Activated CD8-positive, alpha-beta memory T cell treated with anti-CD3 and anti-CD28 coated beads, Interleukin-2, amount 10 ng/mL, durations not matched to agents 7 days and 5 days (primary cell): ENCODE measurements at regions of chr9 and their contacts with region 1.

Region 1: DNA sequence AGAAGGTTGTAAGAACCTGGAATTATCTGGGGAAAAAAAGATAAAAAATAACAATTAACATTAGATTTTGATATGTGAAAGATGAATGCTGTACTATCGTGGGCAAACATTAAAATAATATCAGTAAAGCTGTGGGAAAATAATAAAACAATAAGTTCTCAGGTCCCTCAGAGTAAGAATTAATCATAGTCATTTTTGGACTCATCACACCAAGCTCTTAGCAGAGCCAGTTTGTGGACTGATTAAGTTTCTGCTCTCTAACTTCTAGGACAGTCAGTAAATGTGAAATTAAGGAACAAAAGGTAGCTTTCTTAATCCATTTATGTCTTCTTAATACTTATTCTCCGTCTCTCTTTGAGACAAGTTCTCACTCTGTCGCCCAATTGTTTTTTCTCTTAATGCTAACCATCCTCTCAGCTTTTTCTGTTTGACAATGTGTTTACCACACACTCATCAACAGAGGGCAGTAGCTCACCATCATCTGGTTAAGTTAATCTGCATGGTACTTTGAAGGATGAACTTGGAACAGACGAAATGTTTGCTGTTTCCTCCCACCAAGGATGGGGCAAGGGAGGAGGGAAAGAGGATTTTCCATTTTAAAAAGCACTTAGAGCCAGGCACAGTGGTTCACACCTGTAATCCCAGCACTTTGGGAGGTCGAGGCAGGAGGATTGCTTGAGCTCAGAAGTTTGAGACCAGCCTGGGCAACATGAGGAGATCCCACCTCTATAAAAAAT is 5.3 kb upstream of the ACO1 start:
- DNase-seq: peak; percentile 64
- ATAC-seq: peak; percentile 82
- H3K4me3 Mint-ChIP-seq: peak overlapping the region; percentile 2
- H3K27ac Mint-ChIP-seq: no peak overlapping the region
- H3K4me1 Mint-ChIP-seq: peaks cover 15% of the 10 kb centered on the region
- H3K27me3 Mint-ChIP-seq: peaks cover 36% of the 10 kb centered on the region

Region 2: GRCh38 chr9:32344551-32345182 is 34.5 kb before region 1 on chr9:
- CTCF ChIA-PET with region 1: no interaction called
- DNase-seq: no peak
- ATAC-seq: peak; percentile 84
- H3K4me3 Mint-ChIP-seq: no peak overlapping the region
- H3K27ac Mint-ChIP-seq: no peak overlapping the region
- H3K4me1 Mint-ChIP-seq: peaks cover 12% of the 10 kb centered on the region
- H3K27me3 Mint-ChIP-seq: no peaks in the 10 kb centered on the region

Region 3: DNA sequence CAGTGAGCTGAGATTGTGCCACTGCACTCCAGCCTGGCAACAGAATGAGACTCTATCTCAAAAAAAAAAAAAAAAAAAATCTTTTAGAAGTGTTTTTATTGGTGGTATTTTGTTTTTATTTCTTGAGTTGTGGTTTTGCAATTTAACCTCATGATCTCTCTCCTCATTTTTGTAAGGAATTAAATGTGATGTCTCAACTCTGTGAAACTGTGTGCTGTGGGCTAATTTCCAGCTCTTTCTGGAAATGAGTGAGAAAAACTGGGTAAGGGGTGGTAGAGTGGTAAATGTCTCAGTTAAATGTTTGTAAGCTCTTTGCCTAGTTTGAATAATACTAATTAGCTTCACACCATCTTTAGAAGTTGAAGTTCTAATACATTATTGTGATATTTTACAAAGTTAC is 34.3 kb after region 1 on chr9:
- CTCF ChIA-PET with region 1: interaction called, 12 read pairs
- DNase-seq: no peak
- ATAC-seq: no peak
- H3K4me3 Mint-ChIP-seq: no peak overlapping the region
- H3K27ac Mint-ChIP-seq: no peak overlapping the region
- H3K4me1 Mint-ChIP-seq: no peaks in the 10 kb centered on the region
- H3K27me3 Mint-ChIP-seq: no peaks in the 10 kb centered on the region

Region 4: GRCh38 chr9:32431940-32432555 is 52.9 kb after region 1 on chr9:
- CTCF ChIA-PET with region 1: interaction called, 23 read pairs
- DNase-seq: no peak
- ATAC-seq: no peak
- H3K4me3 Mint-ChIP-seq: no peak overlapping the region
- H3K27ac Mint-ChIP-seq: no peak overlapping the region
- H3K4me1 Mint-ChIP-seq: peaks cover 2% of the 10 kb centered on the region
- H3K27me3 Mint-ChIP-seq: no peaks in the 10 kb centered on the region

Region 5: GRCh38 chr9:32550562-32551433 is 171.6 kb after region 1 on chr9:
- CTCF ChIA-PET with region 1: interaction called, 15 read pairs
- DNase-seq: peak; percentile 96
- ATAC-seq: peak; percentile 83
- H3K4me3 Mint-ChIP-seq: peak overlapping the region; percentile 96
- H3K27ac Mint-ChIP-seq: peak overlapping the region; percentile 98
- H3K4me1 Mint-ChIP-seq: peaks cover 33% of the 10 kb centered on the region
- H3K27me3 Mint-ChIP-seq: no peaks in the 10 kb centered on the region

Region 6: DNA sequence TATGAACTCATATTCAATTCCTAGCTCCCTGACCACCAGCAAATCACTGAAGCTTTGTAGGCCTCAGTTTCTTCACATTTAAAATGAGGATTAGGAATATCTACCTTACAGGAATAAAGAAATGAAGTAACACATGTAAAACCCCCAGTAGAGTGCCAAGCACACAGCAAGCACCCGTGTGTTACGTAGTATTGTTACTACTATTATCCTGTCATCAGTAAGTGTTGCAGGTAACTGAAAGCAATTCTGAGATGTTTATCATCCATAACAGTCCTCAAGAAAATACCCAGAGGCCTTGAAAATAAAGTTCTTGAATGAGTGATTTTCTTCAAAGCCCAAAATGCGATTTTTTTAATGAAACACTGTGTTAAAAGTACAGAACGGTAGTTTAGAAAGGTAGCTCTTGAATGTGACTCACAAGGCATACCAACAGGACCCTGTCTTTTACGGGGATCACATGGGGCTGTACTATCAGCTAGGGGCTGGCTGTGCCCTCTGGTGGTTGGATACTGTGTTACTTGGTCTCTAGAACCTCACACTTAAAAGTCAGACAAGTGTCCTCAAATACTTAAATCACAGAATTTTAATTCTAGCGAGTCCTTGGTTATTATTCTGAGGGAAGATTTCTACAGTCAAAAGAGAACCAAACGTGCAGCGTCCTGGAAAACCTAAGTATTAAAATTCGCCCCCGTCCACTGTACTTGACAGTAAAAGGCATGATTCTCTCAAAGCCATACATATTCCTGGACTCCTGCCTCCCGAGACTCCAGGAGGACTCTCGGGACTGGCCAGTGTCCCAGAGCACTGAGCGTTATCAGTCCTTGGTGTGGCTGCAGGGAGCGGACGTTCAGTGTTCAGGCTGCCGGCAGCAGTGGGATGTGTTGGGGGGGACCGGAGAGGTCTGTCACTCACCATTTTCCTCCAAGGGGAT is 193.1 kb after region 1 on chr9:
- CTCF ChIA-PET with region 1: interaction called, 454 read pairs
- DNase-seq: peak; percentile 89
- ATAC-seq: peak; percentile 85
- H3K4me3 Mint-ChIP-seq: peak overlapping the region; percentile 97
- H3K27ac Mint-ChIP-seq: peak overlapping the region; percentile 98
- H3K4me1 Mint-ChIP-seq: peaks cover 27% of the 10 kb centered on the region
- H3K27me3 Mint-ChIP-seq: no peaks in the 10 kb centered on the region

Region 7: GRCh38 chr9:32968101-32969011 is 589.2 kb after region 1 on chr9:
- CTCF ChIA-PET with region 1: interaction called, 35 read pairs
- DNase-seq: peak; percentile 63
- ATAC-seq: peak; percentile 27
- H3K4me3 Mint-ChIP-seq: no peak overlapping the region
- H3K27ac Mint-ChIP-seq: no peak overlapping the region
- H3K4me1 Mint-ChIP-seq: no peaks in the 10 kb centered on the region
- H3K27me3 Mint-ChIP-seq: no peaks in the 10 kb centered on the region